Posterior vena cava (tissue), 2 donors: ENCODE measurements at regions of chr1 and their contacts with region 1.

Region 1: DNA sequence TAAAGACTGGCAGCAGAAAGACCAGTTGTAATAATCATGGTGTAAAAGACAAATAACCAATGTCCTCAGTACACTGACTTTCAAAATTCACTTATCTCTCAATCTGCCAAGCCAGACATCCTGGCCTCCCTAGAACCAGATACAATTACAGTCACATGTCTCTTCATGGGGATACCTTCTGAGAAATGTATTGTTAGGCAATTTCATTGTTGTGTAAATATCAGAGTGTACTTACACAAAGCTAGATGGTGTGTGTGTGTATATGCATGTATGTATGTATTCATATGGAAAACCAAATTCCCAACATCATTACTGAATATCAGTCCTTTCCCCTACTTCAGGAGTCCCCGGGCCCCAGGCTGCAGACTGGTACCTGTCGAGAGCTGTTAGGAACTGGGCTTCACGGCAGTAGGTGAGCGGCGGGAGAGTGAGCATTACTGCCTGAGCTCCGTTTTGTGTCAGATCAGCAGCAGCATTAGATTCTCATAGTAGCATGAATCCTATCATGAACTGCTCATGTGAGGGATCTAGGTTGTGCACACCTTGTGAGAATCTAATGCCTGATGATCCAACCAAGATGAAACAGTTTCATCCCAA is 65.3 kb upstream of the ZNF326 start:
- DNase-seq: no peak

Region 2: DNA sequence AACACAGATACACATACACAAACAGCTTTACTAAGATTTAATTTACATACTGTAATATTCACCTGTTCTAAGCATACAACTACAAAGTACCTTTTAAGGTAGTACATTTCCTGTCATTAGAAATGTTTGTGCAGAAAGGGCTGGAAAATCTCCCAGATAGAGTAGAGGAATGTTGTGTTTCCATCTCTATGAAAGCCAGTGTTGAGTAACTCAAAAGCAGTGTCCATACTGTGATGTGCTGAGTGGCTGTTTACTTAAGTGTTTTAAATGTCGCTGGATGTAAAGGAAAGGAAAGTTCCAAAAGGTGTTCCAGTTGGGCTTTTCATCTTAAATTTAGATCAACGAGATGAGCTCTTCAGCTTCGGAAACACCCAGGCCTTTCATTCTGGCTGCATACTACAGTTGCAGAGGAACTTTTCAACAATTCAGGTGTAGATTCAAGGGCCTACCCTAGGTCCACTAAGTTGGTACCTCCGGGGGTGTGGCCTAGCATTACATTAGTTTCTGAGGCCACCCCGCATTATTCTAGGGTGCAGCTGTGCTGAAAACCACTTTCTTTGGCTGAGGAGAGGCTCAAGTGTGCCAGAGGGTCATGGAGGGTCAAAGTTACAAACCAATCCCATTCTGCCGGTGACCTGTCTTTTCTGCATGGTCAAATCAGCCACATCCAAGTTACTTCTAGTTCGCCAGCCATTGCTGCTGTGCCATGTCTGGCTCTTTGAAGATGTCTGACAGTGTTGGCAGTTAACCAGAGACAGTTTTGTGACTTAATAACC is 30.7 kb before region 1 on chr1:
- intact Hi-C with region 1: loop called in 1 of 2 experiments (anchors 1 kb)
- DNase-seq: no peak